ENCODE measurements at regions of chr10 and their contacts with region 1.

Region 1: DNA sequence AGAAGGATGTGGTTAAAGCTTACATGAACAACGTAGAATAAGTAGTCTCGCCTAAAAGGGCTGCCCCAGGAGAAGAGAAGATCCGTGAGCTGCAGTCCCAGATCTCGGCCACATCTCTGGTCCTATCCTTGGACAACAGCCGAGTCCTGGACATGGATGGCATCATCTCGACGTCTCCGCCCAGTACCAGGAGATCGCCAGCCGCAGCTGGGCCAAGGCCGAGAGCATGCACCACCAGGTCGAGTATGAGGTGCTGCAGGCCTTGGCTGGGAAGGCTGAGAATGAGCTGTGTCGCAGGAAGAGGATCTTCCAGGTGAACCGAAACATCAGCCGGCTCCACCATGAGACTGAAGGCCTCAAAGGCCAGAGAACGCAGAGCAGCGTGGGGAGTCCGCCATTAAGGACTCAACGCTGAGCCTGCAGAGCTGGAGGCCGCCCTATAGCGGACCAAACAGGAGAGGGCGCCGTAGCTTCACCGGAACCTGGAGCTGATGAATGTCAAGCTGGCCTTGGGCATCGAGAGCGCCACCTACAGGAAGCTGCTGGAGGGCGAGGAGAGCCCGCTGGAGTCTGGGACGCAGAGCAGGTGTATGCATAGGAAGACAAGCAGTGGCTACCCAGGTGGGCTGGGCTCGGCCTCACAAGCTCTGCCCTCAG is 22.2 kb downstream of the LIPK start:
- DNase-seq: peak; percentile 99
- ATAC-seq: peak; percentile 97
- H3K4me3 Mint-ChIP-seq: no peak overlapping the region
- H3K27ac Mint-ChIP-seq: no peak overlapping the region
- H3K4me1 Mint-ChIP-seq: peaks cover 13% of the 10 kb centered on the region
- H3K27me3 Mint-ChIP-seq: peaks cover 49% of the 10 kb centered on the region
- CTCF ChIP-seq: peak; percentile 95

Region 2: DNA sequence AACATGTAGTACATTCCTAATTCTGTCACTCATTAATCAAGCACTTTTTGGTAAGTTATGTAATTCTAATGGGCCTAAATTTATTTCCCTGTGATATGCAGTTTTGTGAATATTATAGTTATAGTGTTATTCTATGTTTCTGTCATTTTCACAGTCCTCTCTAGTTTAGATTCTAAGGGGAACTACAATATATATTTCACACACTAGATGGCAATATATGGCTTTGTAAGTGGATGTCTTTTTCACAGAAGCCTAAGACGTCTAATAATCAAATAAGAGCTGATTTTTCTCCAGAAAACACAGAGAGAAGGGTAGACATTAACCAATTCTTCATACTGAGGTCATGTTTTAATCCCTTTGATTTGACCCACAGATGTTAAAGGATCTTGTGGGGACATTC is 163.2 kb before region 1 on chr10:
- CTCF ChIA-PET with region 1: interaction called, 18 read pairs
- POLR2A ChIA-PET with region 1: no interaction called
- DNase-seq: no peak
- ATAC-seq: peak; percentile 43; the same call in 1 of the 2 replicates
- H3K4me3 Mint-ChIP-seq: no peak overlapping the region
- H3K27ac Mint-ChIP-seq: no peak overlapping the region
- H3K4me1 Mint-ChIP-seq: no peaks in the 10 kb centered on the region
- H3K27me3 Mint-ChIP-seq: no peaks in the 10 kb centered on the region; the same call in 1 of the 2 replicates
- CTCF ChIP-seq: no peak

Region 3: DNA sequence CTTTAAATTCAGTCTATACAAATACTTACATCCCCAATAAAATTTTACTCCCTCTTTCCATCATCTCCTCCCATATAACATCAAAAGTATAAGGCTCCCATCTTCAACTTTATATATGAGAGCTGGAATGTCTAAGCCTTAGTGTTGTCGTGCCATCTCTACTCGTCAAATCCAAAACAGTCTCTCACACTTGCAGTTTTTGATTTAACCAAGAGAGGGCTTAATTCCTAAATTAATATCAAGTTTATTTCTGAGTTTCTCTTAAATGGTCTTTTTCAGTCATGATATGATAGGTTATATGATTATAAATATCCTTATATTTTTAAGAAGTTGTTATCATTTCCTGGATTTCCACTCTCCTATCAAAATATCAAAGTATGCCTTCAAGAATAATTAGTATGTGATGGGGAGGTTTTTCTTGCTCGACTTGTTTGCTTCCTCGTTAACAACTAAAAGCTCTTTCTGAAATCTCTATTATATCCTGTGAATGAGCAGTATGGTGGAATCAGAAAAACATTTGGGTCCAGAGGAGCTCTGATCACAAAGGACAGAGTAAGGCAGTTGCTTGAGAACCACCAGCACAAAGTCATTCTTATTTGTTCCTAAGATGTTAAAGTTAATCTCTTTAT is 34.7 kb before region 1 on chr10:
- CTCF ChIA-PET with region 1: interaction called, 17 read pairs
- POLR2A ChIA-PET with region 1: no interaction called
- DNase-seq: no peak
- ATAC-seq: no peak
- H3K4me3 Mint-ChIP-seq: no peak overlapping the region
- H3K27ac Mint-ChIP-seq: no peak overlapping the region
- H3K4me1 Mint-ChIP-seq: no peaks in the 10 kb centered on the region
- H3K27me3 Mint-ChIP-seq: peaks cover 83% of the 10 kb centered on the region
- CTCF ChIP-seq: no peak

Region 4: DNA sequence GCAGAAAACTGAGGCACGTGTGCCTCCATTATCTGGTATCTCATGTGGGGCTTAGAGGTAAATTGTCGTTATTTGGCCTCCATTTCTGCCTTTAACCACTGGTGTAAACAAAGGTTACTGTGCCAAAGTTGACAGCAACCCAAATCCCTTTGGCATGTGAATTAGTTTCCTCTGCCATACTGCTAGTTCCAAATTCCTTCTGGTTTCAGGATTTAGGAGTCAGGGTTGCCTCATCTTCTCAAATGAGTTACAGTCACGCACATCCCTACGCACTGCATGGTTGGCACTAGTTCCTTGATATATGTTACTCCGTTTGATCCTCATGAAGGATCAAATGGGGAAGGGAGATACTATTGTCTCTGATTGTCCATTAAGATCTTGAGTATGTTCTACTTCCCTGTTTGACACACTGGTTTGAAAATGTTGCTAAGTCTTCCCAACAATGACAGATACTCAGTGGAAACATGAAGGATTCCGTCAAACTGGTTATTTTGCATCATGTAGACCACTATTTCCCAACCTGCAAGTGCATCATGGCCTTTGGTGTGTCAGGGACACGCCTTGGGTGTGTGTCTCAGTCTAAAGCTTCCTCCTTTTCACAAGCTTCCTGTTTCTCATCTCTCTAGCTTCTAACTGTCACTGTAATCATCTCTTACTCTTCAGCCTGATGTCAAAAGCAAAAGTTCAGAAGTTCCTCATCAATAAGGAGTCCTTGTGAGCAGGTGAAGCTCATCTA is 31.3 kb after region 1 on chr10 and contains the start of gene LIPN:
- CTCF ChIA-PET with region 1: interaction called, 15 read pairs
- POLR2A ChIA-PET with region 1: no interaction called
- DNase-seq: no peak
- ATAC-seq: no peak
- H3K4me3 Mint-ChIP-seq: no peak within 1 kb of the TSS
- H3K27ac Mint-ChIP-seq: no peak within 1 kb of the TSS
- H3K4me1 Mint-ChIP-seq: peaks cover 9% of the 10 kb centered on the region
- H3K27me3 Mint-ChIP-seq: 0 out of 2 replicates have a peak, but pooled peaks cover 3% of the 10 kb centered on the region
- CTCF ChIP-seq: no peak
- total RNA-seq, gene LIPN: not detected in 3 replicates

Region 5: DNA sequence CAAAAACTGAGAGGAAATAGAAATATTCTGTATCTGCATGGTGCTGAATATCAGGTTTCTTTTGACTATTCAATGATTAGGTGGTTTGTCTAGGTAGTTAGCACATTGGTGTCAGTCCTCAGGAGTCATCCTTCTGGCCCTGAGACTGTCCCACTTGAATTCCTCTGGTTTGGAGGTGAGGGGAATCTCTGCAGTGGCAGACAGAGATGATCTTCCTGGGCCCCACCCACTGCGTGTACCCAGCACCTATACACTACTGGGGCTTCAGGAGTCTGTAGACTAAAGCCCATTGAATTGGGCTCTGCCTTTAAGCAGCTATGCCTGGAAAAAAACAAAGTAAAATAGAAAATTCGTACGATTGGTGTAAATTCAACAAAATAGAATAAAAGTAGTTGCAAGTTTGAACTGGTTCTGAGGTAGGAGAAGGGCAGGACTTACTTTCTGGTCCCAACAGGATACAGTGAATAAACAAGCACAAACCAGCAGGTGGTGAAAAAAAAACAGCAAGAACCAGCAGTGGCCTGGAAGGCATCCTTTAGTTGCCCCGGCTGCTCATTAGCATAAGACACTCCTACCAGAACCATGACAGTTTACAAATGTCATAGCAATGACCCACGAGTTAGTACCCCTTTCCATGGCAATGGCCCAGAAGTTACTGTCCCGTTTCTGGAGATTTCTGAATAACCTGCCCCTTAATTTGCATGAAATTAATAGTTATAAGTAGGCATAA is 76.0 kb after region 1 on chr10:
- CTCF ChIA-PET with region 1: interaction called, 53 read pairs
- POLR2A ChIA-PET with region 1: no interaction called
- DNase-seq: no peak
- ATAC-seq: peak; percentile 97
- H3K4me3 Mint-ChIP-seq: no peak overlapping the region
- H3K27ac Mint-ChIP-seq: no peak overlapping the region
- H3K4me1 Mint-ChIP-seq: peaks cover 10% of the 10 kb centered on the region
- H3K27me3 Mint-ChIP-seq: peaks cover 20% of the 10 kb centered on the region
- CTCF ChIP-seq: no peak

Region 6: GRCh38 chr10:88828310-88828709 is 100.1 kb after region 1 on chr10:
- CTCF ChIA-PET with region 1: interaction called, 25 read pairs
- POLR2A ChIA-PET with region 1: no interaction called
- DNase-seq: no peak
- ATAC-seq: no peak
- H3K4me3 Mint-ChIP-seq: no peak overlapping the region
- H3K27ac Mint-ChIP-seq: no peak overlapping the region
- H3K4me1 Mint-ChIP-seq: no peaks in the 10 kb centered on the region
- H3K27me3 Mint-ChIP-seq: no peaks in the 10 kb centered on the region
- CTCF ChIP-seq: no peak

Region 7: GRCh38 chr10:88932539-88933256 is 204.5 kb after region 1 on chr10:
- CTCF ChIA-PET with region 1: interaction called, 37 read pairs
- POLR2A ChIA-PET with region 1: no interaction called
- DNase-seq: peak; percentile 53
- ATAC-seq: peak; percentile 88
- H3K4me3 Mint-ChIP-seq: no peak overlapping the region
- H3K27ac Mint-ChIP-seq: peak overlapping the region; percentile 79; the same call in 1 of the 2 replicates
- H3K4me1 Mint-ChIP-seq: peaks cover 13% of the 10 kb centered on the region
- H3K27me3 Mint-ChIP-seq: no peaks in the 10 kb centered on the region
- CTCF ChIP-seq: peak; percentile 75

Measured in WTC11 (cell line).